ENCODE measurements at regions of chr16 and their contacts with region 1.

Region 1: DNA sequence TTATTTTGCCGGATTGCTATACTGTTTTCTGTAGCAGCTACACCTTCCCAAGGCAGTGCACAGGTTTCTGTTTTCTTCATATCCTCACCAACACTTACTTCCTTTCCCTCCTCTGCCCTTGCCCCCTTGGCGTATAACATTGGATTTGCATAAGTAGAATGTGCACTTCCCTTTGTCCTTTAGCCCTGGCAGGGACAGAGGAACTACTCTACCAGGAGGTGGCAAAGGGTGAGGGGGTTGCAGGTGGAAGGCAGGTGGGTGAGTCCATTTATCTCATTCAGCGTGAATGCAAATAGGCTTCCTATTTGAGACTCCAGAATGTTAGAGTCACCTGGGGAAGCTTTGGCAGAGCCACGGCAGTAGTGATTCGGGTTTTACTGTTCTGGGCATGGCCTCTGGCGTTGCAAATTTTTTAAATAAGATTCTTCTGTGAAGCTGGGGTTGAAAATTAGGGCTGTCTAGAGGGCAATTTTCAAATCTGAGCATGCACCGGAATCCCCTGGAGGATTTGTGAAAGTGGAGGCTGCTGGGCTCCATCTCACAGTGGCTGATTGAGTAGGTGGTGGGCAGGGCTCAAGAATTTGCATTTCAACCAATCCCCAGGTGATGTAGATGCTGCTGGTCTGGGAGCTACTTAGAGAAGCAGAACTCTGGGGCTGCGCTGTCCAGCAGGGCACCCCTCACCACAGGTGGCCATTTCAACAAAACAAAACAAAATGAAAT is 84.7 kb downstream of the PLCG2 start:
- DNase-seq: no peak
- H3K4me3 ChIP-seq: peak overlapping the region in 3 of 4 experiments; percentile 2 to 23 (median 2); a peak in 3 of 8 replicates
- H3K27ac ChIP-seq: no peak overlapping the region
- H3K4me1 ChIP-seq: peaks cover 0 to 20% (median 13%) of the 10 kb centered on the region in 4 experiments; a peak in 6 of 7 replicates
- H3K27me3 ChIP-seq: no peaks in the 10 kb centered on the region
- CTCF ChIP-seq: no peak
- EP300 ChIP-seq: no peak
- POLR2A ChIP-seq: no peak
- RAD21 ChIP-seq: no peak

Region 2: GRCh38 chr16:81879625-81880024 is 15.8 kb after region 1 on chr16:
- CTCF ChIA-PET with region 1: interaction called, 78 read pairs
- POLR2A ChIA-PET with region 1: interaction called, 4 read pairs
- DNase-seq: no peak
- H3K4me3 ChIP-seq: no peak overlapping the region
- H3K27ac ChIP-seq: no peak overlapping the region
- H3K4me1 ChIP-seq: peaks cover 4 to 14% (median 8%) of the 10 kb centered on the region in 4 experiments
- H3K27me3 ChIP-seq: no peaks in the 10 kb centered on the region
- CTCF ChIP-seq: peak; percentile 37 to 83 (median 80)
- EP300 ChIP-seq: no peak
- POLR2A ChIP-seq: no peak
- RAD21 ChIP-seq: peak in 1 of 2 experiments; percentile 21; a peak in 1 of 4 replicates

Measured in H1 (cell line).